RWPE1 (cell line): ENCODE measurements at regions of chr11 and their contacts with region 1.

Region 1: GRCh38 chr11:13183094-13183825 is 94.3 kb upstream of the BMAL1 start:
- DNase-seq: peak; percentile 39
- H3K27ac ChIP-seq: no peak overlapping the region
- CTCF ChIP-seq: peak; percentile 49

Region 2: GRCh38 chr11:12963792-12964536 is 219.3 kb before region 1 on chr11:
- CTCF ChIA-PET with region 1: interaction called, 15 read pairs
- POLR2A ChIA-PET with region 1: no interaction called
- DNase-seq: peak; percentile 84
- H3K27ac ChIP-seq: no peak overlapping the region
- CTCF ChIP-seq: peak; percentile 84

Region 3: DNA sequence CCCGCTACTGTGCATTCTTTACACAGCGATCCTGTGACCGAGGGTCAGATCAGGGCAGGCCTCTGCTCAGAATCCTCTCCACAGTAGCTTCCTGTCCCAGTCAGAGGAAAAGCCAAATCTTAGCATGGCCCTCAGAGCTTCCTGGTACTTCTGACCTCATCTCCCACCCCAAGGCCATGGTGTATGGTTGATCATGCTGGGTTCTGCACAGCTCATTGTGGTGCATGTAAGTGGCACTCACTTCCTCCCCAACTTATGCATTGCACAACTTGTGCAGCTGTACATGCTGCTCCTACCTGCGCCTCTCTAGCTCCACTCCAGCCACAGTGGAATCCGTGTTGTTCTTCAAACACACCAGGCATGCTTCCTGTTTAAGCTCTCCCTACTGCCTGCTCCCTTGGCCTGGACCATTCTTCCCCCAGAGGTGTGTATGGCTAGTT is 114.7 kb after region 1 on chr11:
- CTCF ChIA-PET with region 1: no interaction called
- POLR2A ChIA-PET with region 1: no interaction called
- DNase-seq: no peak
- H3K27ac ChIP-seq: peak overlapping the region; percentile 6; the same call in 1 of the 2 replicates
- CTCF ChIP-seq: no peak